ENCODE measurements at regions of chr7 and their contacts with region 1.

Region 1: GRCh38 chr7:5083311-5083711 is 37.7 kb downstream of the RBAK start:
- DNase-seq: no peak
- ATAC-seq: no peak
- H3K4me3 ChIP-seq: no peak overlapping the region
- H3K27ac ChIP-seq: no peak overlapping the region
- H3K4me1 ChIP-seq: peaks cover 0 to 5% (median 0%) of the 10 kb centered on the region in 12 donors
- H3K27me3 ChIP-seq: peaks cover 0 to 31% (median 6%) of the 10 kb centered on the region in 9 donors
- CTCF ChIP-seq: no peak
- POLR2A ChIP-seq: no peak

Region 2: DNA sequence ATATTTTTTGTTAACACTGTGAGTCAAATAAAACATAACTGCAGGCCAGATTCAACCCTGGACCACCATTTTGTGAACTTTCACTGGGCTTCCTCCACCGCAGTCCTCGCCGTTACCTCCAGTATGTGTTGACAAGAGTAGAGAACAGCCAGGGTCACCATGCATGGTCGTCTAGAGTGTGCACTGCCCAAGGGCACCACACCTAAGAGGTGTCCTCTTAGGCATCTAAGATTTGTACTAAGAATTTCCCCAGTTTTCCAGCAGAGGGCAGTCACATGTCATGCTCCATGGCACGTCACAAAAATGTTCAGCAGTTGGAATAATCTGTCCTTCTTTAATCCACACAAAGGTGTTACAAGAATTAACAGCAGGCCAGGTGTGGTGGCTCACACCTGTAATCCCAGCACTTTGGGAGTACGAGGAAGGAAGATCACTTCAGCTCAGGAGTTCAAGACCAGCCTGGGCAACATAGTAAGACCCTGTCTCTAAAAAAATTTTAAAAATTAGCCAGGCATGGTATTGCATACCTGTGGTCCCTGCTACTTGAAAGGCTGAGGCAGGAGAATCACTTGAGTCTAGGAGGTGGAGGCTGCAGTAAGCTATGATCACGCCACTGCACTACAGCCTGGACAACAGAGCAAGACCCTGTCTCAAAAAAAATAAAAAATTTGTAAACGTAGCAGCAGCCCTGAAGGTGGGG is 472.4 kb before region 1 on chr7:
- intact Hi-C with region 1: loop called in 2 of 10 experiments (anchors 2 to 10 kb)
- DNase-seq: peak in 3 of 5 donors; percentile 30 to 48 (median 39)
- ATAC-seq: peak in 3 of 4 donors; percentile 54 to 78 (median 74)
- H3K4me3 ChIP-seq: no peak overlapping the region
- H3K27ac ChIP-seq: no peak overlapping the region
- H3K4me1 ChIP-seq: peaks cover 0 to 20% (median 9%) of the 10 kb centered on the region in 12 donors
- H3K27me3 ChIP-seq: no peaks in the 10 kb centered on the region
- CTCF ChIP-seq: peak; percentile 72 to 92 (median 81)
- POLR2A ChIP-seq: no peak

Region 3: GRCh38 chr7:4665661-4666060 is 417.6 kb before region 1 on chr7:
- intact Hi-C with region 1: no loop called
- DNase-seq: no peak
- ATAC-seq: peak in 1 of 4 donors; percentile 78
- H3K4me3 ChIP-seq: no peak overlapping the region
- H3K27ac ChIP-seq: peak overlapping the region in 5 of 12 donors; percentile 38 to 64 (median 44)
- H3K4me1 ChIP-seq: peaks cover 0 to 23% (median 0%) of the 10 kb centered on the region in 12 donors
- H3K27me3 ChIP-seq: no peaks in the 10 kb centered on the region
- CTCF ChIP-seq: no peak
- POLR2A ChIP-seq: no peak

Region 4: DNA sequence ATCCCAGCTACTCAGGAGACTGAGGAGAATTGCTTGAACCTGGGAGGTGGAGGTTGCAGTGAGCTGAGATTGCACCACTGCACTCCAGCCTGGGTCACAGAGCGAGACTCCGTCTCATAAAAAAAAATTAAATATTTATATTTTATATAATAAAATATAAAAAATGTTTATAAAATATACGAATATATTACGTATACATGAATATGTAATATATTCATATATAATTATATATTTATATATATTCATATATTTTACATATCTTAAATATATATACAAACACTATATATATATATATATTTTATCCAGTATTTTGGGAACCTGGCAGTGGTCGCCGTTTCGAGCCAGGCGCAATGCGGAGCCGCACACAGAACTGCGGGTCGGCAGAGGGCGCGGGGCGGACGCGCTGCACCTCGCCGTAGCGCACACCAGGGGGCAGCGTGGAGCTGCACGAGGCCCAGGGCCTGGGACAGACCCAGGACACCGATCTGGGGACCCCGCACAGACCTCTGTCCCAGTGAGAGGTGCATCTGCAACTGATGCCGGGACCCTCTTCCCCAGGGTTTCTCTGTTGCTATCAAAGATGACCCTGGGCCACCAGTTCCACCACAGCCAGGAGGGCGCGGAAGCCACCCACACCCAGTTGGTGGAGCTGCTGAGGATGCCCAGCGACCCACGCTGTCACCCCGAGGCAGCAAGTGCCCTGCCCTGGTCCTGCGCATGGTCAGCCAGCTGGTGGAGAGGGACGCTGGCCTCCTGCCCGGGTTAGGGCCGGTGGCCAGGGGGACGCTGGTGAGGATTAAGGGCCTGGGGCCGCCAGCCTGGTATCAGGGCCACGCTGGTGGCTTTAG is 285.2 kb before region 1 on chr7:
- intact Hi-C with region 1: loop called in 8 of 10 experiments (anchors 2 to 10 kb)
- DNase-seq: peak in 3 of 5 donors; percentile 41 to 77 (median 56)
- ATAC-seq: peak in 3 of 4 donors; percentile 68 to 73 (median 69)
- H3K4me3 ChIP-seq: no peak overlapping the region
- H3K27ac ChIP-seq: peak overlapping the region in 6 of 12 donors; percentile 20 to 70 (median 46)
- H3K4me1 ChIP-seq: peaks cover 0 to 26% (median 9%) of the 10 kb centered on the region in 12 donors
- H3K27me3 ChIP-seq: no peaks in the 10 kb centered on the region
- CTCF ChIP-seq: peak; percentile 82 to 96 (median 88)
- POLR2A ChIP-seq: no peak

Region 5: GRCh38 chr7:4819560-4820404 is 263.5 kb before region 1 on chr7:
- intact Hi-C with region 1: loop called in 1 of 10 experiments (anchors 10 kb)
- DNase-seq: peak in 4 of 5 donors; percentile 52 to 74 (median 71)
- ATAC-seq: peak; percentile 28 to 67 (median 54)
- H3K4me3 ChIP-seq: peak overlapping the region in 3 of 12 donors; percentile 8 to 23 (median 22)
- H3K27ac ChIP-seq: peak overlapping the region; percentile 6 to 86 (median 67)
- H3K4me1 ChIP-seq: peaks cover 0 to 49% (median 15%) of the 10 kb centered on the region in 12 donors
- H3K27me3 ChIP-seq: no peaks in the 10 kb centered on the region
- CTCF ChIP-seq: no peak
- POLR2A ChIP-seq: no peak

Region 6: GRCh38 chr7:4830176-4830575 is 253.1 kb before region 1 on chr7:
- intact Hi-C with region 1: loop called in 2 of 10 experiments (anchors 10 kb)
- DNase-seq: peak; percentile 58 to 84 (median 66)
- ATAC-seq: peak; percentile 40 to 88 (median 82)
- H3K4me3 ChIP-seq: no peak overlapping the region
- H3K27ac ChIP-seq: no peak overlapping the region
- H3K4me1 ChIP-seq: peaks cover 0 to 5% (median 0%) of the 10 kb centered on the region in 12 donors
- H3K27me3 ChIP-seq: no peaks in the 10 kb centered on the region
- CTCF ChIP-seq: peak; percentile 59 to 86 (median 74)
- POLR2A ChIP-seq: no peak

Region 7: GRCh38 chr7:4973728-4974198 is 109.5 kb before region 1 on chr7:
- intact Hi-C with region 1: loop called in 7 of 10 experiments (anchors 2 to 10 kb)
- DNase-seq: peak; percentile 88 to 96 (median 91)
- ATAC-seq: peak; percentile 99
- H3K4me3 ChIP-seq: peak overlapping the region; percentile 70 to 94 (median 88)
- H3K27ac ChIP-seq: peak overlapping the region; percentile 35 to 94 (median 86)
- H3K4me1 ChIP-seq: peaks cover 0 to 27% (median 9%) of the 10 kb centered on the region in 12 donors
- H3K27me3 ChIP-seq: no peaks in the 10 kb centered on the region
- CTCF ChIP-seq: peak; percentile 71 to 91 (median 80)
- POLR2A ChIP-seq: peak in 1 of 2 donors; percentile 33

Region 8: DNA sequence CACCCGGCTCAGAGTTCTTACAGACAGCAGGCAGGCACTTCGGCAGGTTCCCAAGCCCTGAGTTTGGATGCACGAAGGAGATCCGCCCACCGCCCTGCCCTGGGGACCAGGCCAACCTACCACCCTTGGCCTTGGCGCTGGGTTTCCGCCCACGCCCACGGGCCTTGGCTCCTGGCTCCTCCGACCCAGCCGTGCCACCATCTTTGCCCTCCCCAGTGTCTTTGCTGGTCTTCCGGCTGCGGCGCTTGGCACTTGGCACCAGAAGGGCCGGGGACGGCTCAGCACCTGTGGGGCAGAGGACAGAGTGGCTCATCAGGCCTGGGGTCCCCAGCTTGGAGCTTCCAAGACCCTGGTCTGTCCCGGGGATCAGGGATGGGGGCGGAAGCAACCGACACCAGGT is 231.6 kb after region 1 on chr7:
- intact Hi-C with region 1: no loop called
- DNase-seq: no peak
- ATAC-seq: peak in 1 of 4 donors; percentile 10
- H3K4me3 ChIP-seq: no peak overlapping the region
- H3K27ac ChIP-seq: no peak overlapping the region
- H3K4me1 ChIP-seq: no peaks in the 10 kb centered on the region
- H3K27me3 ChIP-seq: no peaks in the 10 kb centered on the region
- CTCF ChIP-seq: no peak
- POLR2A ChIP-seq: no peak

Measured in heart left ventricle (tissue), 16 donors.